Esophagus muscularis mucosa (tissue), 4 donors: ENCODE measurements at regions of chr9 and their contacts with region 1.

Region 1: GRCh38 chr9:83937911-83938323 is 16.7 kb upstream of the KIF27 start:
- DNase-seq: no peak
- H3K4me3 ChIP-seq: no peak overlapping the region
- H3K27ac ChIP-seq: no peak overlapping the region
- H3K4me1 ChIP-seq: peaks cover 0 to 14% (median 3%) of the 10 kb centered on the region in 4 donors
- H3K27me3 ChIP-seq: no peaks in the 10 kb centered on the region
- CTCF ChIP-seq: peak; percentile 56 to 65 (median 62)
- EP300 ChIP-seq: no peak
- POLR2A ChIP-seq: no peak

Region 2: GRCh38 chr9:83724436-83724835 is 213.5 kb before region 1 on chr9:
- intact Hi-C with region 1: no loop called
- DNase-seq: no peak
- H3K4me3 ChIP-seq: no peak overlapping the region
- H3K27ac ChIP-seq: no peak overlapping the region
- H3K4me1 ChIP-seq: no peaks in the 10 kb centered on the region
- H3K27me3 ChIP-seq: no peaks in the 10 kb centered on the region
- CTCF ChIP-seq: no peak
- EP300 ChIP-seq: no peak
- POLR2A ChIP-seq: no peak

Region 3: GRCh38 chr9:83980395-83981125 is 42.6 kb after region 1 on chr9 and contains the start of gene RMI1:
- intact Hi-C with region 1: no loop called
- DNase-seq: peak; percentile 100
- H3K4me3 ChIP-seq: peak within 1 kb of the TSS; percentile 76 to 97 (median 88)
- H3K27ac ChIP-seq: peak within 1 kb of the TSS; percentile 98 to 99 (median 99)
- H3K4me1 ChIP-seq: peaks cover 27 to 47% (median 38%) of the 10 kb centered on the region in 4 donors
- H3K27me3 ChIP-seq: no peaks in the 10 kb centered on the region
- CTCF ChIP-seq: peak in 1 of 3 experiments; percentile 21
- EP300 ChIP-seq: no peak
- POLR2A ChIP-seq: peak; percentile 92
- total RNA-seq, gene RMI1: 5.3 to 11.6 (median 6.2) TPM

Region 4: GRCh38 chr9:84031534-84031933 is 93.6 kb after region 1 on chr9:
- intact Hi-C with region 1: no loop called
- DNase-seq: no peak
- H3K4me3 ChIP-seq: no peak overlapping the region
- H3K27ac ChIP-seq: no peak overlapping the region
- H3K4me1 ChIP-seq: no peaks in the 10 kb centered on the region
- H3K27me3 ChIP-seq: no peaks in the 10 kb centered on the region
- CTCF ChIP-seq: no peak
- EP300 ChIP-seq: no peak
- POLR2A ChIP-seq: no peak

Region 5: GRCh38 chr9:84054341-84055010 is 116.6 kb after region 1 on chr9:
- intact Hi-C with region 1: no loop called
- DNase-seq: no peak
- H3K4me3 ChIP-seq: no peak overlapping the region
- H3K27ac ChIP-seq: no peak overlapping the region
- H3K4me1 ChIP-seq: peaks cover 0 to 5% (median 2%) of the 10 kb centered on the region in 4 donors
- H3K27me3 ChIP-seq: no peaks in the 10 kb centered on the region
- CTCF ChIP-seq: no peak
- EP300 ChIP-seq: no peak
- POLR2A ChIP-seq: no peak

Region 6: DNA sequence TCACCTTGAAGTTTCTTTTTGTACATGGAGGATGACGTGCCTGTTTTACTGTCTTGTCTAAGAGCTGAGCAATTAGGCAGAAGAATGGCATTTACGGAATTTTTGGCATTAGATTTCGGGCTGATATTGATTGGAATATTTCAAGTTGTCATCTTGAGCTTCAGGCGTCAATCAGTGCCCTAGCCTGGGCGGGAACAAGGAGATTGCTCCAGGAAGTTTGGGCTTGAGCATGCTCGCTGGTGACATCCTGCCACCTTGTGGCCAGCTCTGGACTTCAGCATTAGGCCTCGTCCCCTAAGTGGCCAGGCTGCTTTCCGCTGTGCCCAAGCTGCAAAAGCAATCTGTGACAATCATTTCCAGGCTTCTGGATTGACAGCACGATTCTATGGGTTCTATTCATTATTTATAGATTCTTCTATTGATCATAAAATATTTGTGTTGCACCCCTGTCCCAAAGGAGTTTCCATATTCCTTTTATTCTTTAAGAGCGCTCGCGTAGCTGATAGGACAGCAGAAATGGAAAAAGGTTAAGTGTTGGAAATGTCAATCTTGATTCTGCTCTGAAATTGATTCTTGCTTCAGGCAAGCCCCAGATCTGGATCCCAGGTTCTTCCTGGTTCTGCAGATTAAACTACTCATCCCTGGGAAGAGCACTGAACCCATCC is 323.3 kb after region 1 on chr9:
- intact Hi-C with region 1: loop called (anchors 1 kb)
- DNase-seq: no peak
- H3K4me3 ChIP-seq: peak overlapping the region; percentile 32 to 52 (median 44)
- H3K27ac ChIP-seq: no peak overlapping the region
- H3K4me1 ChIP-seq: peaks cover 0 to 7% (median 0%) of the 10 kb centered on the region in 4 donors
- H3K27me3 ChIP-seq: peaks cover 0 to 10% (median 0%) of the 10 kb centered on the region in 4 donors
- CTCF ChIP-seq: peak; percentile 88 to 94 (median 92)
- EP300 ChIP-seq: no peak
- POLR2A ChIP-seq: no peak

Region 7: GRCh38 chr9:84315278-84315877 is 377.5 kb after region 1 on chr9:
- intact Hi-C with region 1: loop called (anchors 5 kb)
- DNase-seq: no peak
- H3K4me3 ChIP-seq: no peak overlapping the region
- H3K27ac ChIP-seq: no peak overlapping the region
- H3K4me1 ChIP-seq: peaks cover 0 to 6% (median 0%) of the 10 kb centered on the region in 4 donors
- H3K27me3 ChIP-seq: no peaks in the 10 kb centered on the region
- CTCF ChIP-seq: peak; percentile 77 to 81 (median 80)
- EP300 ChIP-seq: no peak
- POLR2A ChIP-seq: no peak